Activated CD4-positive, alpha-beta memory T cell treated with anti-CD3 and anti-CD28 coated beads, Interleukin-2, amount 10 ng/mL, durations not matched to agents 7 days and 5 days (primary cell): ENCODE measurements at regions of chr19 and their contacts with region 1.

Region 1: DNA sequence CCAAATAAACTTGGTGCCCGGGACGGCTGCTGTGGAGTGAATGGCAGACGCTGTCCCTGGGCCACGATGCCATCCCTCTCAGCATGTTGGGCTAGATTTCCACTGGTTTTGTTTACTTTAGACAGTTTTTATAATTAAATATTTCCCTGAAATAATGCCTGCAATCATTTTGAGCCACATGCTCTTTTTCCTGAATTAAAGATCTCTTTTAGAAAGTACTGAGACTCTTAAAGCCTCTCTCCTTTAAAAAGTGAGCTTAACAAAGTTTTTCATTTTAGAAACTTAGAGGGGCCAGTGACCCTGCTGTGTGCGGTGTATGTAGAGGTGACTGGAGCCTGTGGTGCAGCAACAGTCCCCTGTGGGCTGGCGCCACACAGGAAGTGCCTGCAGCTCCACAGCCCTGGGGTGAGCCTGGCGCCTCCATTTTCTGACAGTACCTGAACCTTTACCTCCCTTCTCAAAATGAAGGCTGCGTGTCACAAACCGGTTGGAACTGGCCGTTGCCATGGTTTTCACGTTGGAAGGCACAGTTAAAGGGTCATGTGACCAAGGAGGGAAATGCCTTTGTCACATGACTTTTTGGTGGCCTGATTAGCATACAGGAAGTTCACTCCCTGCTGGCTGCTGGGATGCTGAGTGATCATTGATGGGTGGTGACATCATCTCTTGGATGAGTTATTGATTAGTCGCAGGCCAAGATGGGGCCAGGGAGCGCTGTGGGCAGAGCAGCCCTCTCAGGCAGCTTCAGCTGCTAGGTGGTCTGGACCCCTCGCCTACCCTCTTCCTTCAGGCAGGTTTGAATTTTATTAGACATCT is 26.3 kb downstream of the TSSK6 start:
- DNase-seq: peak; percentile 98
- H3K4me3 Mint-ChIP-seq: peak overlapping the region; percentile 65
- H3K27ac Mint-ChIP-seq: peak overlapping the region; percentile 98
- H3K4me1 Mint-ChIP-seq: peaks cover 38% of the 10 kb centered on the region
- H3K27me3 Mint-ChIP-seq: no peaks in the 10 kb centered on the region

Region 2: GRCh38 chr19:19192078-19192882 is 296.8 kb before region 1 on chr19 and contains the starts of genes BORCS8 and RFXANK:
- CTCF ChIA-PET with region 1: interaction called, 4 read pairs
- POLR2A ChIA-PET with region 1: interaction called, 13 read pairs
- DNase-seq: peak; percentile 99
- H3K4me3 Mint-ChIP-seq: peak within 1 kb of the TSS; percentile 98
- H3K27ac Mint-ChIP-seq: peak within 1 kb of the TSS; percentile 99
- H3K4me1 Mint-ChIP-seq: peaks cover 48% of the 10 kb centered on the region
- H3K27me3 Mint-ChIP-seq: no peaks in the 10 kb centered on the region
- total RNA-seq, gene BORCS8: 28.5 to 29.0 TPM
- total RNA-seq, gene RFXANK: 100 to 102 TPM

Region 3: GRCh38 chr19:19372656-19373416 is 116.2 kb before region 1 on chr19:
- CTCF ChIA-PET with region 1: interaction called, 155 read pairs
- POLR2A ChIA-PET with region 1: interaction called, 79 read pairs
- DNase-seq: peak; percentile 67
- H3K4me3 Mint-ChIP-seq: peak overlapping the region; percentile 19
- H3K27ac Mint-ChIP-seq: peak overlapping the region; percentile 92
- H3K4me1 Mint-ChIP-seq: peaks cover 14% of the 10 kb centered on the region
- H3K27me3 Mint-ChIP-seq: no peaks in the 10 kb centered on the region

Region 4: GRCh38 chr19:19444681-19445155 is 44.4 kb before region 1 on chr19:
- CTCF ChIA-PET with region 1: interaction called, 10 read pairs
- POLR2A ChIA-PET with region 1: interaction called, 3 read pairs
- DNase-seq: peak; percentile 62
- H3K4me3 Mint-ChIP-seq: peak overlapping the region; percentile 40
- H3K27ac Mint-ChIP-seq: peak overlapping the region; percentile 89
- H3K4me1 Mint-ChIP-seq: peaks cover 65% of the 10 kb centered on the region
- H3K27me3 Mint-ChIP-seq: no peaks in the 10 kb centered on the region

Region 5: DNA sequence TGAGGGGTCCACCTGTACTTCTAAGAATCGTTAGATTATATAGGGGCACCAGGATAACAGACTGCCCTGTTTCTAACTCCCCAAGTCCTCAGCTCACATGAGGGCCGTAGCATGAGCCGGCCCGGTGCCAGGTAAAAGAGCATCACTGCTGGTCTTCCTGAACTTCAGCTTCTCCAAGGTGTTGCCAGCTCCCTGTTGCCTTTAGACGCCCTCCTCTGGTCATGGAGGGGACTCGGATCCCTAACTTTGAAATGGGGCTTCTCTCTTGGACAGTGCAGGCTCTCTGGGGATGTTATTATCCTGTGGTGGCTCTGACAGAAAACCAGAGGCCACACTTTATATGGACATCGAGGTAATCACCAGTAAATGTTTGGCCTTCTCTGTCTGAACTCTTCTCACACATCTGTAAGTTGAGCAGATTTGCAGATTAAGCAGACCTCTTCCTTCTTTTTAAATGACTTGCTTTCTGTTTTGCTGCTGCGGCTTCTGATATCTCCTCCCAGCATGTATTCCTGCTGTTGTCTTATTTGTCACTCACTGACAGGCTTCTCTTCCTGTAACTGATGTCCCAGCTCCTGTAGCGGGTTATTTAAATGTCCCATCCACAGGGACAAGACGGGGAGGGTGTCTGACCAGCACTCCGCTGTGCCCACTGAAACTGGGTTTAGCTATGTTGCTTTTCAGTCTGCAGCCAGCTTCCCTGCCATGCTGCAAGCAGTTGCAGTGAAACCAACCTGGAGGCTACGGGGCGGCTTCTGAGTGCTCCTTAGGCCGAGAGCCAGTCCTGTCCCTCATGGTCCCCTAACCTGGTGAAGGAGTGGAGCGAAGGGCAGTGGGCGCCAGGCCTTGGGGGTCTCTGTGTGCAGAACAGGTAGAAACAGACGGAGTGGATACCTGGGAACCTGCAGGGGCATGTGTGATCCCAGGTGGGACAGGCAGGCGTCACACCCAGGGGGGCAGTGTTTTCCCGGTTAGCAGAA is 12.9 kb before region 1 on chr19:
- CTCF ChIA-PET with region 1: interaction called, 4 read pairs
- POLR2A ChIA-PET with region 1: interaction called, 16 read pairs
- DNase-seq: no peak
- H3K4me3 Mint-ChIP-seq: no peak overlapping the region
- H3K27ac Mint-ChIP-seq: peak overlapping the region; percentile 84
- H3K4me1 Mint-ChIP-seq: peaks cover 84% of the 10 kb centered on the region
- H3K27me3 Mint-ChIP-seq: no peaks in the 10 kb centered on the region